Activated naive CD4-positive, alpha-beta T cell treated with anti-CD3 and anti-CD28 coated beads for 36 hours (primary cell): ENCODE measurements at regions of chr16 and their contacts with region 1.

Region 1: GRCh38 chr16:53503270-53503923 is 388 bp upstream of the AKTIP start:
- DNase-seq: peak; percentile 100
- H3K4me3 Mint-ChIP-seq: peak overlapping the region; percentile 95
- H3K27ac Mint-ChIP-seq: peak overlapping the region; percentile 93
- H3K4me1 Mint-ChIP-seq: peaks cover 54% of the 10 kb centered on the region
- H3K27me3 Mint-ChIP-seq: no peaks in the 10 kb centered on the region

Region 2: DNA sequence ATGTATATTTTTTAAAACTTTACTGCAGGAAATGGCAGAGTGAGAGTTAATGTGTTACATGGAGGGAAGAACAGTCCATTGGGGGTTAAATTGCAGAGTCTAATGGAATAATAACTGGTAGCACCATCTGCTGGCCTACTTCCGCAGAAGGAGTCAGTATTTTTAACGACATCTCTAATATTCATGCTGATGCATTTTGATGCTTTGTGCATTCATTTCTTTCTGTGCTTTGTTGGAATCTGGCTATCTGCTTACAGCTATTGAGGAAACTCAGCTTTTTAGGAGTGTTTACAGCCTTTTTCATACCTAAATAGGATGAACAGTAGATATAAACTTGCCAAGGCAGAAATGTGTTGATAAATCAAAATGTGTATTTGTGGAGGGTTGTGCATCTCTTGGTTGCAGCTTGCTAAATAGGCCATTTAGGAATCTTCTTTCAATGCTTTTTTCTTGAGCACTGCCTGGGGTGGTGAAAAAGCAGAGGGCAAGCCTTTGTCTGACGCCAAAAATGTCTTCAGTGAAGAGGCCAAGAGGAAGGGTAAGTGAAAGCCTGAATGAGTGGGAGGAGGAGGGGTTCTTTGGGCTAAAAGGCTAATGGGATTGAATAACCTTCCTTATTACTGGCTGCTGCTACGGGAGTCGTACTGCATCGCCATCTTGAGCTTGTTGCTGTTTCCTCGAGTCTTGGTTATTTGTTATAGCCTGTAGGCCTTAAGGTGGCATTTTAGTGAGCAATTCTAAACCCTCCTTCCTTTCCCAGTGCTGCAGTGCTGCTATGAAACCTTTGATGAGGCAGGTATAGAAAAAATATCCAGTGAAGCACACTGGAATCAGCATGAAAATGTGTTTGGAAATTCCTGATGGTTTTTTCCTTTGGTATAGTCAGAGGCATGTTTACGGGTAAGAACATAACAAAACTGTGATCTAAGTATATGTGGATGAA is 295.3 kb before region 1 on chr16:
- CTCF ChIA-PET with region 1: no interaction called
- intact Hi-C with region 1: loop called (anchors 5 kb)
- DNase-seq: peak; percentile 30
- H3K4me3 Mint-ChIP-seq: peak overlapping the region; percentile 45
- H3K27ac Mint-ChIP-seq: peak overlapping the region; percentile 34
- H3K4me1 Mint-ChIP-seq: peaks cover 9% of the 10 kb centered on the region
- H3K27me3 Mint-ChIP-seq: no peaks in the 10 kb centered on the region

Region 3: DNA sequence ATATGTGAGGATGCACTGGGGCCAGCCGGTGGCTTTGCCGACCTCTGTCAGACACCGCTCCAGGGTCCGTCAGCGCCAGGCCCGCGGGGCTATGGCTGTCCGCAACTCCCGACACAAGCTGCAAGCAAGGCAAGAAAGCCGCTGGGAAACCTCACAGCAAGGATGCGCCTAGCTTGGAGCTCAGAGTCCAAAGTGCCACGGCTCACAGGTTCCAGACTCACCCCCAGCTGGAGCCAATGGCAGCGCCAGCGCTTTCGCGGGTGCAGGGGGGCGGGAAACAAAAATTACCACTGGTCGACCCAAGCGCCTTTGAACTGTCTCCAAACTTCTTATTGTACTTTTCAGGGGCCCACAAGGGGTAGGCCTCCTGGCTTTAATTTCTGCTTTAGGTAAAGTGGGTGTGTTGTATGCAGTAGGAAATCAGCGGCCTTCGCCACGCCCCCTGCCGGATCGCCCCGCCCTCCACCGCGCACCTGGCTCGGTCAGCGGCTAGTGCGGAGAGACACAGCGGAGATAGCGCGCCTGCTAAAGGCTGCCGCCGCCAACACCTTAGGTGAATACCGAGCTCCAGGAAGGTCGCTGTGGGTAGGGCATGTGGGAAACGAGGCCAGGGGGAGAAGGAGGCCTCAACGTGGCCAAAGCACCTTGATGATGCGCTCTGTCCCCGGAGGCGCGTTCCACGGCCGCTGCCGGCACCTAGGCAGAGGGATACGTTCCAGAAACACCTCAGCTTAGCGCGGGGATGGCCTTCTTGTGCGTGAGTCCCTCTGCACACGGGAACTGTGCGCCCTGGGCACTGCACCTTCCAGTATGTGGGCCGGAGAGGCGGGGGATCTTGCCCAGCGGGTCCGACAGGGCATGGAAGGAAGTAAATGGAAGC is 130.2 kb before region 1 on chr16:
- CTCF ChIA-PET with region 1: interaction called, 4 read pairs
- intact Hi-C with region 1: loop called (anchors 2 kb)
- DNase-seq: peak; percentile 89
- H3K4me3 Mint-ChIP-seq: no peak overlapping the region
- H3K27ac Mint-ChIP-seq: peak overlapping the region; percentile 41
- H3K4me1 Mint-ChIP-seq: peaks cover 37% of the 10 kb centered on the region
- H3K27me3 Mint-ChIP-seq: no peaks in the 10 kb centered on the region

Region 4: GRCh38 chr16:53457670-53458069 is 45.7 kb before region 1 on chr16:
- CTCF ChIA-PET with region 1: interaction called, 4 read pairs
- intact Hi-C with region 1: loop called (anchors 1 kb)
- DNase-seq: peak; percentile 87
- H3K4me3 Mint-ChIP-seq: peak overlapping the region; percentile 57
- H3K27ac Mint-ChIP-seq: peak overlapping the region; percentile 94
- H3K4me1 Mint-ChIP-seq: peaks cover 86% of the 10 kb centered on the region
- H3K27me3 Mint-ChIP-seq: no peaks in the 10 kb centered on the region

Region 5: GRCh38 chr16:53530046-53530445 is 26.6 kb after region 1 on chr16:
- CTCF ChIA-PET with region 1: no interaction called
- intact Hi-C with region 1: loop called (anchors 1 kb)
- DNase-seq: no peak
- H3K4me3 Mint-ChIP-seq: no peak overlapping the region
- H3K27ac Mint-ChIP-seq: no peak overlapping the region
- H3K4me1 Mint-ChIP-seq: peaks cover 12% of the 10 kb centered on the region
- H3K27me3 Mint-ChIP-seq: no peaks in the 10 kb centered on the region